ENCODE measurements at regions of chr15 and their contacts with region 1.

Region 1: DNA sequence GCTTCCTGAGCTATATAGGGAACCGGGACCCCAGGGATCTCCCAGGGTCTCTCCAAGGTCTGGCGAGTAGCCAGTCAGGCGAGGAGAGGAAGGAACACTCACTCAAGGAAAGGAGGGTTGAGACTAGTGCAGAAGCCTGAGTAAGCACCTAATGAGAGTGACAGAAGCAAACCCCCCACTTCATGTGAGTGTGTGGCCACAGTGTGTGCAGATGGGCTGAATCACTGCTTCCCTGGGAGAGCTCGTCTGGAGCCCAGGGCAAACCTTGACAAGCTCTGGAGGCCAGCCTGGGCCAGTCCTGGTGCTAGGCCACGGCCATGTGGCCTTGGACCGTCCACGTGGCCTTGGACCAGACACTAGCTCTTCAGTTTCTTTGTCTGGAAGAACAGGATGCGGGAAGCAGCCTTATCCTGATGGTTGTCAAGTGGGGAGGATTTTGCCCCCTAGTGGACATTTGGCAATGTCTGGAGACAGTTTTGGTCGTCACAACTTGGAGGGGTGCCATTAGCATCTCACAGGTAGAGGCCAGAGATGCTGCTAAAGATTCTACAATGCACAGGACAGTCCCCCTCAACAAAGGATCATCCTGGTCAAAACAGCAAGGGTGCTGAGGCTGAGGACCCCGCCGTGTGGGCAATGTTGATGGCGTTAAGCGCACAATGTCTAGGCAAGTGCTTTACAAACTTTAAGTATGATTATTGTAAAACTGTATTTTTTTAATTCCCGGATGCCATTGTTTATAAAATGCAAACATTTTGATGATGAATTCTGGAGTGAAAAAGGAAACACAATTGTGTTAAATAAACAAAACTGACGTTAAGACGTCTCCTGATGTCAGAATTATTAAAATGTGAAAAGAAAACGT is 34.8 kb upstream of the CTSH start:
- DNase-seq: peak; percentile 67
- H3K4me3 ChIP-seq: no peak overlapping the region
- H3K27ac ChIP-seq: no peak overlapping the region
- H3K4me1 ChIP-seq: peaks cover 0 to 10% (median 0%) of the 10 kb centered on the region in 4 donors
- H3K27me3 ChIP-seq: no peaks in the 10 kb centered on the region
- CTCF ChIP-seq: peak; percentile 63 to 71 (median 66)
- EP300 ChIP-seq: no peak
- POLR2A ChIP-seq: no peak

Region 2: DNA sequence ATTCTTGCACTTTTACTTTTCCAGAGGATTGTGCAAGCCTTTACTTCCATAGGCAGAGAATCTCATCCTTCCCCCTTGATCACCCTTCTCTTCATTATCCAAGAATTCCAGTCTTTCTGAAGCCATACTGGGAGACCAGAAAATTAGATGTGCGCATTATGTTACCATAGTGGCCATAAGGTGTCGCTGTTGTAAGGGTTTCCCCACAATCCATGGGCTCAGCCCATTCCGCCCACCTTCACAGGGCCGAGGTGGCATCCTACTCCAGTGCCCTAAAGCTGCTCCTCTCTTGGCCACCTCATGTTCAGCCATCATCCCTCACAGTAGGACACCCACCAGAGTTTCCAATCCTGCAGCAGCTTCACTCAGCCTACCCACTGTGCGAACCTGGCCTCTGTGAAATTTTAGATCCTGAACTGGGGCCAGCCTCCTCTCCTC is 69.9 kb before region 1 on chr15:
- in situ Hi-C with region 1: no loop called
- intact Hi-C with region 1: loop called (anchors 5 kb)
- DNase-seq: no peak
- H3K4me3 ChIP-seq: no peak overlapping the region
- H3K27ac ChIP-seq: no peak overlapping the region
- H3K4me1 ChIP-seq: peaks cover 2 to 6% (median 3%) of the 10 kb centered on the region in 4 donors
- H3K27me3 ChIP-seq: no peaks in the 10 kb centered on the region
- CTCF ChIP-seq: peak; percentile 54 to 67 (median 62)
- EP300 ChIP-seq: no peak
- POLR2A ChIP-seq: no peak

Region 3: GRCh38 chr15:79035111-79035601 is 55.5 kb after region 1 on chr15:
- in situ Hi-C with region 1: no loop called
- intact Hi-C with region 1: no loop called
- DNase-seq: no peak
- H3K4me3 ChIP-seq: no peak overlapping the region
- H3K27ac ChIP-seq: no peak overlapping the region
- H3K4me1 ChIP-seq: no peaks in the 10 kb centered on the region
- H3K27me3 ChIP-seq: peaks cover 3% of the 10 kb centered on the region
- CTCF ChIP-seq: no peak
- EP300 ChIP-seq: no peak
- POLR2A ChIP-seq: no peak

Measured in transverse colon (tissue), 4 donors.